AG04450 (cell line): ENCODE measurements at regions of chr20 and their contacts with region 1.

Region 1: DNA sequence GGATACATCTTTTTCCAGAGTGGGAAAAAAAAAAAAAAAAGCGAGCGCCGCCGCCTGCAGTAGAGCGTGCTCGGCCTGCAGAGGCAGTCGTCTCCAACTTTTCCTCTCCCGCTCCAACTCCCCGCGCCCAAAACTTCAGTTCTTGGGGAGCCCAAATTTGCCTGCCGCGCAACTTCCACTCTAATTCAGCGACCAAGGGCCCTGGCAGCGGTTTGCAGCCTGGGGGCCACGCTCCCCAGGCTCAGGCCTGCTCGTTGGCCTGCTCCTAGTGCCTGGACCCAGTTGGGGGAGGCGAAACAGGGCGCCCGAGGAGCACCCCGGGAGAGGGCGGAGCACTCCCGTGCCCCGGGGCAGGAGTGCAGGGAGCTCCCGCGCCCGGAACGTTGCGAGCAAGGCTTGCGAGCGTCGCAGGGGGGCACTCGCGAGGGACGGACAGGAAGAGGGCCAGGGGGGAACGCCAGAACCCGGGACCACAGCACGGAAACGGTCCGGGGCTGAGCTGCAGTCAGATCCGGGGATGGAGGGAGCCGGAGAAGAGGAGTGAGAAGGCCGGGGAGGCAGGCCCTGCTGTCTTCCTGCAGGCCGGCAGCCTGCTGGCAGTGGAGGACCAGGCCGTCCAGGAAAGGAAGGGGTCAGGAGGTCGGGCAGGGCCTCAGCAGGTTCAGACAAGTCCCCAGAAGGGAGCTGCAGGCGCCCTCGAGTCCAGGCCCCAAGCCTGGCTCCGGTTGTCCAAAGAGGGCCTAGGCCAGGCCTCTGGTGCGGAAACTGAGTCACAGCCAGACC is at the start of gene STX16:
- DNase-seq: peak; percentile 86
- H3K4me3 ChIP-seq: peak within 1 kb of the TSS; percentile 92
- H3K27ac ChIP-seq: peak within 1 kb of the TSS; percentile 96
- H3K27me3 ChIP-seq: no peaks in the 10 kb centered on the region
- CTCF ChIP-seq: peak; percentile 51
- polyA plus RNA-seq, gene STX16: 43.8 and 51.9 TPM in 2 replicates

Region 2: DNA sequence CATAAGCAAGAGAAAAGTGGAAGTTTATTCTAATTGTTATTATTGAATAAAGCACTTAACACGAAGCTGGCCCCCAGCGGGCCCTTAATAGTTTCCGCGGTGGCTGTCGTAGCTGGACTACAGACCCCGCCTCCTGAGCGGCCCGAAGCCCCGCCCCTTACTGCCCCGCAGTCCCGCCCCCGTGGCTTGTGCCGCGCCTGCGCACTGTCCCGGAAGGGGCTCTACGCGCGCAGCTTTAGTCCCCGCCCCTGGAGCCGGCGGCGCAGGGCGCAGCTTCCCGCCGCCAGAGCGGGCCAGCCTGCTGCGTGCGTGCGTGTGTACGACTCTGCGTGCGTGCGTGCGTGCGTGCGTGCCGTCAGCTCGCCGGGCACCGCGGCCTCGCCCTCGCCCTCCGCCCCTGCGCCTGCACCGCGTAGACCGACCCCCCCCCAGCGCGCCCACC is 262.1 kb before region 1 on chr20 and contains the start of gene VAPB:
- CTCF ChIA-PET with region 1: interaction called, 4 read pairs
- POLR2A ChIA-PET with region 1: interaction called, 12 read pairs
- DNase-seq: peak; percentile 92
- H3K4me3 ChIP-seq: peak within 1 kb of the TSS; percentile 93
- H3K27ac ChIP-seq: peak within 1 kb of the TSS; percentile 86
- H3K27me3 ChIP-seq: no peaks in the 10 kb centered on the region
- CTCF ChIP-seq: no peak
- polyA plus RNA-seq, gene VAPB: 36.3 and 43.8 TPM in 2 replicates